Heart left ventricle (tissue), 16 donors: ENCODE measurements at regions of chrX and their contacts with region 1.

Region 1: GRCh38 chrX:17860811-17861488 is at the start of gene RAI2:
- DNase-seq: peak; percentile 33 to 61 (median 48)
- ATAC-seq: peak; percentile 20 to 70 (median 64)
- H3K4me3 ChIP-seq: peak within 1 kb of the TSS; percentile 28 to 90 (median 70)
- H3K27ac ChIP-seq: peak within 1 kb of the TSS in 11 of 12 donors; percentile 56 to 84 (median 79)
- H3K4me1 ChIP-seq: peaks cover 0 to 6% (median 0%) of the 10 kb centered on the region in 12 donors
- H3K27me3 ChIP-seq: peaks cover 0 to 31% (median 0%) of the 10 kb centered on the region in 9 donors
- CTCF ChIP-seq: peak in 4 of 12 donors; percentile 12 to 25 (median 18)
- POLR2A ChIP-seq: peak in 1 of 2 donors; percentile 44
- total RNA-seq, gene RAI2: 16.2 to 31.3 (median 22.4) TPM

Region 2: DNA sequence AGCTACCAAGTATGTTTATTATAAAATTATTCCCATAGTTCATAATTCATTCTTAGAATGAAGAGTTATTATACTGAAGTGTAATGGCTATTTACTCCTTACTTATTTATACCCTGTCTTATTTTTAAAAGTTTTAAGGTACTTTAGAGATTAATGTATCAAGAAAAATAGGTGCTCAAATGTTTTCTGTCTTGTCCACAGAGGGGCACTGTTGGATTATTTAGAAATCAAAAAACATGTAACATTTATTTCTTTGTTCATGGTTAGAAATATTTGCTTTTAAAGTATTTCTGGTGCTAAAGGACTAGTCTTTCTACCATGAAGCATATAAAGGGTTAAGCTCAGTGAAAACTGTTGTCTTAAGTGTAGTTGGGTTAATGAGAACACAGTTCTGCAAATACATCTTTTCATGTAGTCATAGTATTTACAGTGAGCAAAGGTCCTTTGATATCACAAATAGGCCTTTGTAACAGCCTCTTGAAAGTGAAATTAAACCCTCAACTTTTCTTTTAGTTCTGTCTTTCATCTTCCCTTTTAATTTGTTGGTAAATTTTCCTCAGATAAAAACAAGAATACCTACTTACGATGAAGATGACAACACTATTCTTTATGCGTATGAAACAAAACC is 115.9 kb before region 1 on chrX:
- intact Hi-C with region 1: loop called in 1 of 10 experiments (anchors 10 kb)
- DNase-seq: no peak
- ATAC-seq: no peak
- H3K4me3 ChIP-seq: no peak overlapping the region
- H3K27ac ChIP-seq: no peak overlapping the region
- H3K4me1 ChIP-seq: peaks cover 0 to 4% (median 0%) of the 10 kb centered on the region in 12 donors
- H3K27me3 ChIP-seq: peaks cover 0 to 11% (median 0%) of the 10 kb centered on the region in 9 donors
- CTCF ChIP-seq: peak in 11 of 12 donors; percentile 22 to 45 (median 34)
- POLR2A ChIP-seq: no peak

Region 3: GRCh38 chrX:17802756-17803155 is 58.2 kb before region 1 on chrX:
- intact Hi-C with region 1: no loop called
- DNase-seq: no peak
- ATAC-seq: no peak
- H3K4me3 ChIP-seq: no peak overlapping the region
- H3K27ac ChIP-seq: no peak overlapping the region
- H3K4me1 ChIP-seq: no peaks in the 10 kb centered on the region
- H3K27me3 ChIP-seq: peaks cover 0 to 5% (median 0%) of the 10 kb centered on the region in 9 donors
- CTCF ChIP-seq: no peak
- POLR2A ChIP-seq: no peak

Region 4: GRCh38 chrX:17812763-17813162 is 48.2 kb before region 1 on chrX:
- intact Hi-C with region 1: loop called in 3 of 10 experiments (anchors 5 to 10 kb)
- DNase-seq: no peak
- ATAC-seq: peak in 3 of 4 donors; percentile 48 to 63 (median 53)
- H3K4me3 ChIP-seq: no peak overlapping the region
- H3K27ac ChIP-seq: no peak overlapping the region
- H3K4me1 ChIP-seq: peaks cover 0 to 17% (median 2%) of the 10 kb centered on the region in 12 donors
- H3K27me3 ChIP-seq: no peaks in the 10 kb centered on the region
- CTCF ChIP-seq: peak; percentile 37 to 68 (median 55)
- POLR2A ChIP-seq: no peak

Region 5: DNA sequence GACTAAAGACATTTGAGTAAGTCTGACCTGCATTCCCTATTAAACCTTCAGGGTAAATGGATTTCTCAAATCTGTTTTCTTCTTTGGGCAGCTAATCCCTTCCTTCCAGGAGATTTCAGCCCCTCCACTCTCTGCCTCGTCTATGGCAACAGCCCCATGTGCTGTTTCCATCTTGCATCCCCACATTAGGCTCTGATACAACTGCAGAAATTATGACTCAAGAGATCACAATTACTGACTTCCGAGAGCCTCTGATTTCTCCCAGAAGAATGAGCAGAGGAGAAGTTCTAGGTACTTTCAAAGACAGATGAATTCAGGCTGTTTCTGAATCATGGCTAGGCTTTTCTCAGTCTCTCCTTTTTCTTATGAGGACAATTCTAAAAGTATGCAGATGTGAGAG is 38.6 kb before region 1 on chrX:
- intact Hi-C with region 1: loop called in 5 of 10 experiments (anchors 5 to 10 kb)
- DNase-seq: no peak
- ATAC-seq: no peak
- H3K4me3 ChIP-seq: no peak overlapping the region
- H3K27ac ChIP-seq: no peak overlapping the region
- H3K4me1 ChIP-seq: peaks cover 0 to 16% (median 1%) of the 10 kb centered on the region in 12 donors
- H3K27me3 ChIP-seq: peaks cover 0 to 3% (median 0%) of the 10 kb centered on the region in 9 donors
- CTCF ChIP-seq: no peak
- POLR2A ChIP-seq: no peak

Region 6: DNA sequence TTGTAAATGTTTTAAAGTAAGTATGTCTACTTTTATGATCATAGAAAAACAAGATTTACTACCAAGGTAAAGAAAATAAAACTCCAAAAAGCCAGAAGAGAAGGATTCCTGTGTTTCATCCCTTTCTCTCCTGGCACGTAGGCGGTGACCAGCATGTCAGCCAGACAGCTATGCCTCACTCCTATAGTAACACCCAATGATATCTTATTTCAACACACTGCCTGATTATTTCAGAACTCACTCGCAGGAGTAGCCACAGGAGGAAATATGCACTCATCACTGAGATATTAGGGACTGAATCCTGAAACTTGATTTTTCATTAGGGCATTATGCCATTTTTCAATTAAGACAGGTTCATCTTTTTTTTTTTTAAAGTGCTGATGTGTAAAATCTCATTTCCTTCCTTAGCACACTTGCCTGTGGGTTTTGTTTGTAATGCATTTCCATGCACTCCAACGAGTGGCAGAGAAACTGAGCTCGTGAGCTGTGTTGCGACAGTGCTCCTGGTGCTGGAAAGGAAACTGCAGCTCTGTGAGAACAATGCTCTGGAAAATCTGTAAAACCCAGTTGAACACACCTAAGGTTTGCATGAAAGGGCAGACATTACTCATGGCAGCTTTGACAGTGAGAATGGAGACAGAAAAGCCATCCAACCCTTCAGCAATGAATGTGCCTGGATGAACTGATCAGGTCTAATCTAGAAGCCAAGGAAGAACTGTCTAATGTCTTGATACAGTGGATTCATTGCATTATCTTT is 18.0 kb before region 1 on chrX:
- intact Hi-C with region 1: no loop called
- DNase-seq: no peak
- ATAC-seq: peak in 3 of 4 donors; percentile 55 to 78 (median 57)
- H3K4me3 ChIP-seq: no peak overlapping the region
- H3K27ac ChIP-seq: peak overlapping the region in 6 of 12 donors; percentile 24 to 63 (median 36)
- H3K4me1 ChIP-seq: peaks cover 0 to 39% (median 19%) of the 10 kb centered on the region in 12 donors
- H3K27me3 ChIP-seq: peaks cover 0 to 12% (median 0%) of the 10 kb centered on the region in 9 donors
- CTCF ChIP-seq: no peak
- POLR2A ChIP-seq: no peak